ENCODE measurements at regions of chr4 and their contacts with region 1.

Region 1: GRCh38 chr4:10034136-10034535 is 12.8 kb upstream of the SLC2A9 start:
- DNase-seq: no peak

Region 2: GRCh38 chr4:10063544-10064300 is 29.6 kb after region 1 on chr4:
- intact Hi-C with region 1: loop called in 1 of 2 experiments (anchors 1 kb)
- DNase-seq: peak; percentile 92